ENCODE measurements at regions of chr3 and their contacts with region 1.

Region 1: GRCh38 chr3:102979682-102980369 is 545.0 kb downstream of the ZPLD1 start:
- DNase-seq: peak; percentile 10
- H3K4me3 ChIP-seq: no peak overlapping the region
- H3K27ac ChIP-seq: no peak overlapping the region
- H3K4me1 ChIP-seq: no peaks in the 10 kb centered on the region
- H3K27me3 ChIP-seq: no peaks in the 10 kb centered on the region
- CTCF ChIP-seq: no peak
- POLR2A ChIP-seq: no peak

Region 2: DNA sequence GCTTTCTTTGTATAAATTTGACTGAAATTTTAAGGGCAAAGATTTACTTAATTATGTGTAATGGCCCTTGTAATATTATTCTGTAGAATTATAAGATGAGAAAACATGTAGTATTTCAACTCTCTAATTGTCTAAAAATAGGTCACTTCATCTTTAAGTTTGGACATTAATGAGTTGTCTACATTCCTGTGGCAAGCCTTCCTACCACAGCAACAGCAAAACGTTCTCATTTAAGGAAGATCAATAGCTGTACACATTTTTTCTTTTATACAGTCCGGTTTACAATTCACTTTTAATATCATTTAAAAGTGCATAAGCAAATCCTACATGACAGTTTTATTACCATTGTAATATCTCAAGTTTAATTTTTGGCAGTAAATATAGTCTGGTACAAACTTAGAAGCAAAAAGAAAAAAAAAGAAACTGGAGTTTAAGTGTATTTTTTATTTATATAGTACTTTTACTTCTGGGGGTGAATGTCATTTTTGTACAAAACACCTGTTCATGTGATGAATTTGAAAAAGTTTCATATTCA is 43.2 kb before region 1 on chr3:
- intact Hi-C with region 1: loop called (anchors 5 kb)
- DNase-seq: no peak
- H3K4me3 ChIP-seq: no peak overlapping the region
- H3K27ac ChIP-seq: no peak overlapping the region
- H3K4me1 ChIP-seq: no peaks in the 10 kb centered on the region
- H3K27me3 ChIP-seq: no peaks in the 10 kb centered on the region
- CTCF ChIP-seq: no peak
- POLR2A ChIP-seq: no peak

Region 3: GRCh38 chr3:103009609-103010008 is 29.8 kb after region 1 on chr3:
- intact Hi-C with region 1: no loop called
- DNase-seq: no peak
- H3K4me3 ChIP-seq: no peak overlapping the region
- H3K27ac ChIP-seq: no peak overlapping the region
- H3K4me1 ChIP-seq: no peaks in the 10 kb centered on the region
- H3K27me3 ChIP-seq: no peaks in the 10 kb centered on the region
- CTCF ChIP-seq: no peak
- POLR2A ChIP-seq: no peak